ENCODE measurements at regions of chr21 and their contacts with region 1.

Region 1: DNA sequence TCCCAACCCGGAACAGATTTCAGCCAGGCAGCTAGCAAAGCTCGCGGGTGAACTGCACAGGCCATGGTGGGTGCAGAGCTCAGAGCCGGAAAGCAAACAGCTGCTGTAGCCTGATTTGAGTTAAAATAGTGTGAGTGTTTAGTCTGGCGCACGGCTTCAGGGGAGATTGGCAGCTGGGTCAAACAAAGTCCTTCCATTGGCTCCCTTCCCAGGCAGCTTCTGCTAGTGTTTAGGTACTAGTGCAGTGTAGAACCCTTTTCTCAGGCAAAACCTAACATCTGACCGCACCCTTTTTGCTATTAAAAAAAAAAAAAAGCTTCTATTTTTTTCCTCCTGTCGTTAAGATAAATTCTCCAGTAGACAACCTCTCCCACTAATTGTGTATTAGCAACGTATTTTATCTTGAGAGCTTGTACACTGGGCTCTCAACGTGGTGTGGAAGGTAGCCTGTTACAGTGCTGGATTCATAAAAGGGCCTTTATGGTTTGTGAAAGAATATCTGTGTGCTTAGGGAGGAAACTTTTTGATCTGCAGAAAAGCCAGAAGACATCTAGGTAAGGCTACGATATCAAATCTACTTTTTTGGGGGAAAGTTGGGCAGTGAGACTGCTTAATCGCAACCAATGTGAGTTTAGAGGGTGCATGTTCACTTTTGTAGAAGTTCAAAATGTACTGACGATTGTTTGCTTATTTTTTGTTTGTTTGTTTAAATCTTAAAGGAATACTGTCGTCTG is 689.6 kb downstream of the USP25 start:
- DNase-seq: peak; percentile 66 to 90
- ATAC-seq: peak; percentile 85 to 97 (median 92)
- H3K4me3 ChIP-seq: peak overlapping the region; percentile 1 to 62 (median 52)
- H3K27ac ChIP-seq: peak overlapping the region; percentile 72 to 90 (median 86)
- H3K4me1 ChIP-seq: peaks cover 0 to 38% (median 12%) of the 10 kb centered on the region in 9 donors
- H3K27me3 ChIP-seq: no peaks in the 10 kb centered on the region
- CTCF ChIP-seq: no peak

Region 2: DNA sequence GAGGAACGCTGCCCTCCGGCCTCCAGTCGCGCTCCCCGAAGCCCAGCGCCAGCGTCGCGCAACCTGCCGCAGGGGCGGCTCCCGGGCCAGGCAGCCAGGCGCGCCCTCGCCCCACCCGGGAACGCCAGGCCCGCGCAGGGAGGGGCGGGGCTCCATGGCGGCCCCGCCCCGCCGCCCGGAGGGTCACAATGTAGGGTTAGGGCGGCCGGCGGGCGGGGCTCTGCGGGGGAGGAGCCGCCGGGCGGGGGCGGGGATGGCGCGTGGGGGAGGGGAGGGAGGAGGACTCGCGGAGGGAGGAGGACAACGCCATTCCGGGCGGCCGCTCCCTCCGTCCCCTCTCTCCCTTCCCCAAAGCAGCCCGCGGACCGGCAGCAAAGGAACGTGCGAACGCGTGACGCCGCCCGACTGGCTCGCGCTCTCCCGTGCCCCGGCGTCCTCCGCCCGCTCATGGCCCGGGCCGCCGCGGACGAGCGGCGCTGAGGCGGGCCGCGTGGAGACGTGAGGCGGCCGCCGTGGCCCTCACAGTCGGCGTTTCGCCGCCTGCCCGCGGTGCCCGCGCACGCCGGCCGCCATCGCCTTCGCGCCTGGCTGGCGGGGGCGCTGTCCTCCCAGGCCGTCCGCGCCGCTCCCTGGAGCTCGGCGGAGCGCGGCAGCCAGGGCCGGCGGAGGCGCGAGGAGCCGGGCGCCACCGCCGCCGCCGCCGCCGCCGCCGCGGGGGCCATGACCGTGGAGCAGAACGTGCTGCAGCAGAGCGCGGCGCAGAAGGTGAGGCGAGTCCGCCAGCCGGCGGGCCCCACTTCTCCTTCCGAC is 689.5 kb before region 1 on chr21 and contains the start of gene USP25:
- intact Hi-C with region 1: loop called in 1 of 10 experiments (anchors 5 kb)
- DNase-seq: peak; percentile 92 to 95
- ATAC-seq: peak; percentile 97 to 100 (median 98)
- H3K4me3 ChIP-seq: peak within 1 kb of the TSS; percentile 58 to 93 (median 82)
- H3K27ac ChIP-seq: peak within 1 kb of the TSS; percentile 86 to 98 (median 94)
- H3K4me1 ChIP-seq: peaks cover 0 to 44% (median 23%) of the 10 kb centered on the region in 9 donors
- H3K27me3 ChIP-seq: no peaks in the 10 kb centered on the region
- CTCF ChIP-seq: peak in 2 of 9 donors; percentile 6 to 9
- total RNA-seq, gene USP25: 42.9 to 57.7 (median 46.5) TPM

Region 3: GRCh38 chr21:16169102-16169511 is 250.2 kb before region 1 on chr21:
- intact Hi-C with region 1: no loop called
- DNase-seq: no peak
- ATAC-seq: no peak
- H3K4me3 ChIP-seq: no peak overlapping the region
- H3K27ac ChIP-seq: no peak overlapping the region
- H3K4me1 ChIP-seq: no peaks in the 10 kb centered on the region
- H3K27me3 ChIP-seq: no peaks in the 10 kb centered on the region
- CTCF ChIP-seq: no peak

Region 4: GRCh38 chr21:16194095-16194787 is 225.1 kb before region 1 on chr21:
- intact Hi-C with region 1: loop called in 4 of 10 experiments (anchors 5 to 10 kb)
- DNase-seq: peak; percentile 48 to 71
- ATAC-seq: peak; percentile 80 to 95 (median 92)
- H3K4me3 ChIP-seq: peak overlapping the region; percentile 9 to 59 (median 50)
- H3K27ac ChIP-seq: peak overlapping the region; percentile 47 to 86 (median 74)
- H3K4me1 ChIP-seq: peaks cover 0 to 35% (median 4%) of the 10 kb centered on the region in 9 donors
- H3K27me3 ChIP-seq: no peaks in the 10 kb centered on the region
- CTCF ChIP-seq: peak in 6 of 9 donors; percentile 28 to 65 (median 48)

Region 5: DNA sequence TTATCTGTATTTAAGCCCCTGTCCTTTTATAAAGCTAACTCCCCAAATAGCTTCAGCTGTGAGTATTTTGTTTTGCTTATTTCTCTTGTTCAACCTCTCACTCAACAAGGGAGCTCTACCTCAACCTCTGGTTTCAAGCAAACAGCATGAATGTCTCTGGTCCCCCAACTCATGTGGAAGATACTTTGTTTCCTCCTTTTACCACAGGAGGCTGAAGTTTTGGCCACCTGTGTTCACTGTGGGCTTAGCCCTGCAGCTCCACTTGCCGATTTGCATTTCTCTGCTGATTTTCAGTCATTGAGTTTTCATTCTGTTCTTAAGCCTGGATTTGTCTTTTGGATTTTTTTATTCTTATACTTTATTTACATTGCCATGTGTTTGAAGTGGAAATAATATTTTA is 76.4 kb before region 1 on chr21:
- intact Hi-C with region 1: no loop called
- DNase-seq: no peak
- ATAC-seq: no peak
- H3K4me3 ChIP-seq: no peak overlapping the region
- H3K27ac ChIP-seq: no peak overlapping the region
- H3K4me1 ChIP-seq: no peaks in the 10 kb centered on the region
- H3K27me3 ChIP-seq: no peaks in the 10 kb centered on the region
- CTCF ChIP-seq: no peak

Region 6: GRCh38 chr21:16377120-16377658 is 42.2 kb before region 1 on chr21:
- intact Hi-C with region 1: loop called in 3 of 10 experiments (anchors 1 to 5 kb)
- DNase-seq: no peak
- ATAC-seq: peak; percentile 28 to 69 (median 54)
- H3K4me3 ChIP-seq: no peak overlapping the region
- H3K27ac ChIP-seq: peak overlapping the region in 9 of 10 donors; percentile 49 to 83 (median 72)
- H3K4me1 ChIP-seq: peaks cover 0 to 41% (median 34%) of the 10 kb centered on the region in 9 donors
- H3K27me3 ChIP-seq: no peaks in the 10 kb centered on the region
- CTCF ChIP-seq: no peak

Region 7: GRCh38 chr21:16454399-16454798 is 35.0 kb after region 1 on chr21:
- intact Hi-C with region 1: loop called in 1 of 10 experiments (anchors 5 kb)
- DNase-seq: no peak
- ATAC-seq: peak; percentile 53 to 70 (median 68)
- H3K4me3 ChIP-seq: no peak overlapping the region
- H3K27ac ChIP-seq: peak overlapping the region in 2 of 10 donors; percentile 3
- H3K4me1 ChIP-seq: peaks cover 3 to 83% (median 34%) of the 10 kb centered on the region in 9 donors
- H3K27me3 ChIP-seq: no peaks in the 10 kb centered on the region
- CTCF ChIP-seq: peak in 6 of 9 donors; percentile 38 to 63 (median 48)

Region 8: GRCh38 chr21:16534408-16535101 is 115.2 kb after region 1 on chr21:
- intact Hi-C with region 1: loop called in 7 of 10 experiments (anchors 2 to 10 kb)
- DNase-seq: peak; percentile 63 to 80
- ATAC-seq: peak; percentile 66 to 83 (median 77)
- H3K4me3 ChIP-seq: peak overlapping the region in 9 of 10 donors; percentile 12 to 63 (median 49)
- H3K27ac ChIP-seq: peak overlapping the region; percentile 66 to 92 (median 86)
- H3K4me1 ChIP-seq: peaks cover 0 to 38% (median 17%) of the 10 kb centered on the region in 9 donors
- H3K27me3 ChIP-seq: no peaks in the 10 kb centered on the region
- CTCF ChIP-seq: no peak

Region 9: DNA sequence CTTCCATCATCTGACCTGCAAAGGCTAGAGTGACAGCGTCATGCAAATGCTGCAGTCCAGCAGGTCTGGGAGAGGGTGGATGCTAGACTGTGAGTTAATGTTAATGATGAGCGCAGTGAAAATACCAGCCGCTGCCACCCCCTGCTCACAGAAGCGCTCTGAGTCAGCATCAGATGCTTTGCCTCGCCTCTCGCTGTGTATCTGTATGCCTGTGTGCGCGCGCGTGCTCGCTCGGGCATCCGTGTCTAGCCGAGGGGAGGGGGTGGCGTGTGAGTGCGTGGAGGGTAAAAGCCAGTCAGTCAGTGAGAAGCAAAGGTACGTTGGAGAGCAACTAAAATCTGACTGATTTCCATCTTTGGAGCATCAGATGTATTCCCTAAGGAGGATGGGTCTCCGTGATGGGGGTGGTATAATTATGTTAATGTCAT is 169.1 kb after region 1 on chr21:
- intact Hi-C with region 1: loop called in 1 of 10 experiments (anchors 10 kb)
- DNase-seq: peak; percentile 45 to 51
- ATAC-seq: peak; percentile 79 to 94 (median 91)
- H3K4me3 ChIP-seq: peak overlapping the region; percentile 16 to 54 (median 44)
- H3K27ac ChIP-seq: peak overlapping the region in 9 of 10 donors; percentile 51 to 75 (median 68)
- H3K4me1 ChIP-seq: peaks cover 2 to 43% (median 20%) of the 10 kb centered on the region in 9 donors
- H3K27me3 ChIP-seq: no peaks in the 10 kb centered on the region
- CTCF ChIP-seq: no peak

Measured in heart right ventricle (tissue), 16 donors.